PC-9 (cell line): ENCODE measurements at regions of chr15 and their contacts with region 1.

Region 1: GRCh38 chr15:74816808-74817674 is 4.4 kb downstream of the LMAN1L start:
- DNase-seq: peak; percentile 69 to 75
- H3K4me3 ChIP-seq: no peak overlapping the region
- H3K27ac ChIP-seq: peak overlapping the region; percentile 4; the same call in 1 of the 2 replicates
- H3K4me1 ChIP-seq: peaks cover 37% of the 10 kb centered on the region
- H3K27me3 ChIP-seq: no peaks in the 10 kb centered on the region
- CTCF ChIP-seq: no peak; the same call in 1 of the 2 replicates

Region 2: GRCh38 chr15:74799856-74800547 is 17.0 kb before region 1 on chr15:
- CTCF ChIA-PET with region 1: interaction called, 3 read pairs
- POLR2A ChIA-PET with region 1: interaction called, 10 read pairs
- intact Hi-C with region 1: no loop called
- DNase-seq: peak; percentile 63 to 89
- H3K4me3 ChIP-seq: no peak overlapping the region
- H3K27ac ChIP-seq: no peak overlapping the region
- H3K4me1 ChIP-seq: 0 out of 2 replicates have a peak, but pooled peaks cover 8% of the 10 kb centered on the region
- H3K27me3 ChIP-seq: no peaks in the 10 kb centered on the region
- CTCF ChIP-seq: peak; percentile 96

Region 3: DNA sequence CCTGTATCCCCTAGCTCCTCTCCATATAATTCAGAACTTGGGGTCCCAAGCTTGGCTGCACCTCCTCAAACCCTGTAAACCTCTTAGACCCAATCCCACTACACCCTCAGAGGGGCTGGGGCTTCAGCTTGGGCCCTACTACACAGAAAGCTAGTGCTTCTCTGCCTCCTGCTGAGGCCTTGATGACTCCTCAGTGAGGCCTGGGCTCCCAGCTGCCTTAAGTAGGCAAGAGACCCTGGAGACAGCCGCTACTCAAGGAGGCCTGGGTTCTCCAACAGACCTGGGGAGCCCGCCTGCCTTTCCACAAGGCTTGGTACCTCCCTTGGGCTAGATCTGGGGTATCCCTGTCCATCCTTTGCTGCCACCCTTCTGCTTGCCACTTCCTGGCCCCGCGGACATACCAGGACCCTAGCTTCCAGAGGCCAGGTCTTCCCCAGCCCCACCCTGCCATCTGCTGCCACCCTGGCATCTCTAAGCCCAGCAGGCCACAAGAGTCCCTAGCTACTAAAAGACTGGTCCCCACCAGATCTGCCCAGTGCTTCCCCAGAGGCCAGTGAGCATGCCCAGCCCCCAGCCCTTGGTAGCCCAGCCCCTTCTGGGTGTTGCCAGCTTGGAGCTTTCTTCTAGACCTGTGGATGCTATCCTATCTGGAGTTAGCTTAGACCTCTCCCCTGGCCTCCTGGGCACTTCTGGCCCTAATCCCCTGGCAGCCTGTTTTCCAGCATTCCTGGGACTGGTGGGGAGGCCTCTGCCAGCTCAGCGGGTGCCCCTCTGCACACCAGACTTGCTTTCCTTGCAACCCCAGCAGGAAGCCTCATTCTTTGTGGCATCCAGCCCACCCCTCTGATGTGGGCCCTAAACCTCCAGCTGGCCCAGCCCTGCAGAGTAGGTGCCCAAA is 398.3 kb after region 1 on chr15:
- CTCF ChIA-PET with region 1: no interaction called
- POLR2A ChIA-PET with region 1: no interaction called
- intact Hi-C with region 1: no loop called
- DNase-seq: peak; percentile 64 to 67
- H3K4me3 ChIP-seq: no peak overlapping the region
- H3K27ac ChIP-seq: peak overlapping the region; percentile 25; the same call in 1 of the 2 replicates
- H3K4me1 ChIP-seq: peaks cover 15% of the 10 kb centered on the region
- H3K27me3 ChIP-seq: no peaks in the 10 kb centered on the region
- CTCF ChIP-seq: no peak